ENCODE measurements at regions of chr9 and their contacts with region 1.

Region 1: GRCh38 chr9:18705796-18706397 is 231.9 kb downstream of the ADAMTSL1 start:
- DNase-seq: no peak
- H3K4me3 ChIP-seq: peak overlapping the region in 1 of 4 donors; percentile 9
- H3K27ac ChIP-seq: peak overlapping the region in 3 of 4 donors; percentile 12 to 52 (median 33)
- H3K4me1 ChIP-seq: peaks cover 16 to 59% (median 55%) of the 10 kb centered on the region in 4 donors
- H3K27me3 ChIP-seq: no peaks in the 10 kb centered on the region
- CTCF ChIP-seq: no peak
- EP300 ChIP-seq: no peak
- POLR2A ChIP-seq: no peak

Region 2: GRCh38 chr9:18673179-18673578 is 32.7 kb before region 1 on chr9:
- intact Hi-C with region 1: loop called (anchors 2 kb)
- DNase-seq: no peak
- H3K4me3 ChIP-seq: no peak overlapping the region
- H3K27ac ChIP-seq: no peak overlapping the region
- H3K4me1 ChIP-seq: peaks cover 0 to 15% (median 11%) of the 10 kb centered on the region in 4 donors
- H3K27me3 ChIP-seq: no peaks in the 10 kb centered on the region
- CTCF ChIP-seq: no peak
- EP300 ChIP-seq: no peak
- POLR2A ChIP-seq: no peak

Region 3: GRCh38 chr9:18824095-18824666 is 118.3 kb after region 1 on chr9:
- intact Hi-C with region 1: no loop called
- DNase-seq: no peak
- H3K4me3 ChIP-seq: no peak overlapping the region
- H3K27ac ChIP-seq: no peak overlapping the region
- H3K4me1 ChIP-seq: peaks cover 5 to 19% (median 13%) of the 10 kb centered on the region in 4 donors
- H3K27me3 ChIP-seq: no peaks in the 10 kb centered on the region
- CTCF ChIP-seq: no peak
- EP300 ChIP-seq: no peak
- POLR2A ChIP-seq: no peak